ENCODE measurements at regions of chr6 and their contacts with region 1.

Region 1: DNA sequence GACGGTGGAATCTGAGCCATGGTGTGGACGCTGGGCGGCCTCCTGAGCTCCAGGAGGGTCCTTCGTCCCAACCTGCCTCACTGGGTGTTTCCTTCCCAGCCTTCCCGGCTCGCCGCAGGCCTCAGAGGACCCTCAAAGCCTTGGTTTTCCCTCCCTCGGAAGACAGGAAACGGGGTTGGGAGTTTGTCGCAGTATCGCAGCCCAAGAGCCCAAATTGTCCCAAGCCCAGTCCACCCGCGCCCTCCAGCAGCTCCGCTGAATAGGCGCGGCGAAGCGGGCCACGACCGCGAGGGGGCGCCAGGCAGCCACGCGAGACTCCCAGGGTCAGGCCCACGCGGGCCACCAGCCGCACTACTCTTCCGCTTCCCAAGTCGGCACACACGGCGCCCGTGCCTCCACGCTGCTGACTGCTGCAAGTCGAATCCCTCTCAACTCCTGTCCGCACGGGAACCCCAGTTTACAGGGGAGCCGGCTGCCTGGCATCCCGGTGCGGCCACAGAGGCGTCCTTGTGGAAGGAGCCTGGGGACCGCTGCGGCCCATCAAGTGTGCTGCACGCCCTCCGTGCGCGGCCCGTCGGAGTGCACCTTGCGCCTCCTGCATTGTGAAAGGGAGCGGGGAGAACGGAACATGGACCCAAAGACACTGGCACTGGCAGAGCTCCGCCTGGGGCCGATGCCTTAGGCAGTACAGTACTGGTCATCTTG is 40.4 kb upstream of the HMGA1 start:
- DNase-seq: peak; percentile 77
- H3K4me3 Mint-ChIP-seq: peak overlapping the region; percentile 79
- H3K27ac Mint-ChIP-seq: no peak overlapping the region
- H3K4me1 Mint-ChIP-seq: peaks cover 6% of the 10 kb centered on the region
- H3K27me3 Mint-ChIP-seq: peaks cover 13% of the 10 kb centered on the region

Region 2: DNA sequence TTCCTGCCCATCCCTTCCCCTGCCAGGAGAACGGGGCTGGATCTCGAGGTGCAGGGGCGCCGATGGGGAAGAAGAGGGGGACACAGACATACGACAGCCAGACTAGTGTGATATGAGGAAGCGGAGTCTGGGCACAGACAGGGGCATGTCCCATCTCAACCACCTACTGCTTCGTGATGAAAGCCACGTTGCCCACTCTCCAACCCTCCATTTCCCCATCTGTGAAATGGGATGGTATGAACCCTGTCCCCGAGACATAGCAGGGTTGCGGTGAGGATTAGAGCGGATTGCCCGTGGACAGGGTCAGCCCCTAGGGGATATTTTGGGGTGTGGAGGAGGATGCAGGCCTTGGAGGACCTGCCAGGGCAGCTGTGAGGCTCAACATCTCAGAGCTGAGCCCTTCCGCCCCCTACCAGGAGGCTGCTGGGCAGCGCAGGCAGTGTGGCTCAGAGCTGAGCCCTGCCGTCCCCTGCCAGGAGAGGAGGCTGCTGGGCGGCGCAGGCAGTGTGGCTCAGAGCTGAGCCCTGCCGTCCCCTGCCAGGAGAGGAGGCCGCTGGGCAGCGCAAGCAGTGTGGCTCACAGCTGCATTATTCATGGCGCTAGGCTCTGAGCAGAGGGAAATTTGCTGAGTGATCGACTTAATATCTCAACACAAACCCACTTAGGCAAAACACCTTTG is 122.1 kb before region 1 on chr6:
- intact Hi-C with region 1: no loop called
- DNase-seq: no peak
- H3K4me3 Mint-ChIP-seq: no peak overlapping the region
- H3K27ac Mint-ChIP-seq: no peak overlapping the region
- H3K4me1 Mint-ChIP-seq: no peaks in the 10 kb centered on the region
- H3K27me3 Mint-ChIP-seq: no peaks in the 10 kb centered on the region

Region 3: DNA sequence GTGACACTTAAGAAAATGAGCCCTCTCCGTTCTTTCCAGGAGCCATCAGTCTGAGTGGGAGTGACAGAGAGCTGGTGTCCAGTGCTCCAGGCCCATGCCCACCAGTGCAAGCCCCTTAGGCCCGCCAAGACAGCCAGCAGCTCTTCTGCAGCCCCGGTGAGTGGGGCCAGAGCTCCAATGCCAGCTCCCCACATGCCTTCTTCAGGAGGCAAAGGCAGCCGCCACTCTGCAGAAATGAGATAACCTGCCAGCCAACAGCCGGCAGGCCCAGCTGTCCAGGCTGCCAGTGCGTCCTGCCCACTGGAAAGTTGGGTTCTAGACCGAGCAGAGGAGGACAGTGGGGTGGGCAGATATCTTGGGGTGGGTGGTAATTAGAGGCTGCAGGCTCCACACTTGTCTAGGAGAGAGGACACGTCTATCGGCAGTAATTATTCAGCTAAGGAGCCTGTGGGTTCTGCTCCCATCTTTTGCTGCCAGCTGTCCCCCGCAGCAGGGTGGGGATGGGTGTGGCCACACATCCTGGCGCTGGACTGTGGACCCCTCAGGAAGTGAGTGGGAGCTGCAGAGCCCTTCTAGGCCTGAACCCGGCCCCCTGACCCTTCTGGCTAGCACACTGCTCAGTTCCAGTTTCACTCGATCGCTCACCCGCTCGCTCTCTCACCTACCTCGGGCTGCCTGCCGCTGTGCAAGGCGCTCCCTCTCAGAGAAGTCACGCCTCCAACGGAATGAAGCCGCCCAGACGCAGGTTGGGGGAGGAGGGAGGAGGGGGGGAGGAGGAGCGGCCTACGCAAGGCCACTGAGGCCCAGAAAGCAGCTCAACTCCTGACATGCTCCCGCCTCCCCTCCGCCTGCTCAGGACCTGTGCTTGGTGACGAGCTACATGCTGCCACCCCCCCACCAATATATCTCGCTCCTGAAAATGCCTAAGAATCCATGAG is 53.9 kb before region 1 on chr6:
- intact Hi-C with region 1: no loop called
- DNase-seq: no peak
- H3K4me3 Mint-ChIP-seq: no peak overlapping the region
- H3K27ac Mint-ChIP-seq: no peak overlapping the region
- H3K4me1 Mint-ChIP-seq: peaks cover 2% of the 10 kb centered on the region
- H3K27me3 Mint-ChIP-seq: peaks cover 64% of the 10 kb centered on the region

Region 4: GRCh38 chr6:34305982-34306708 is 109.9 kb after region 1 on chr6:
- intact Hi-C with region 1: no loop called
- DNase-seq: no peak
- H3K4me3 Mint-ChIP-seq: no peak overlapping the region
- H3K27ac Mint-ChIP-seq: no peak overlapping the region
- H3K4me1 Mint-ChIP-seq: peaks cover under 1% of the 10 kb centered on the region
- H3K27me3 Mint-ChIP-seq: no peaks in the 10 kb centered on the region

Region 5: DNA sequence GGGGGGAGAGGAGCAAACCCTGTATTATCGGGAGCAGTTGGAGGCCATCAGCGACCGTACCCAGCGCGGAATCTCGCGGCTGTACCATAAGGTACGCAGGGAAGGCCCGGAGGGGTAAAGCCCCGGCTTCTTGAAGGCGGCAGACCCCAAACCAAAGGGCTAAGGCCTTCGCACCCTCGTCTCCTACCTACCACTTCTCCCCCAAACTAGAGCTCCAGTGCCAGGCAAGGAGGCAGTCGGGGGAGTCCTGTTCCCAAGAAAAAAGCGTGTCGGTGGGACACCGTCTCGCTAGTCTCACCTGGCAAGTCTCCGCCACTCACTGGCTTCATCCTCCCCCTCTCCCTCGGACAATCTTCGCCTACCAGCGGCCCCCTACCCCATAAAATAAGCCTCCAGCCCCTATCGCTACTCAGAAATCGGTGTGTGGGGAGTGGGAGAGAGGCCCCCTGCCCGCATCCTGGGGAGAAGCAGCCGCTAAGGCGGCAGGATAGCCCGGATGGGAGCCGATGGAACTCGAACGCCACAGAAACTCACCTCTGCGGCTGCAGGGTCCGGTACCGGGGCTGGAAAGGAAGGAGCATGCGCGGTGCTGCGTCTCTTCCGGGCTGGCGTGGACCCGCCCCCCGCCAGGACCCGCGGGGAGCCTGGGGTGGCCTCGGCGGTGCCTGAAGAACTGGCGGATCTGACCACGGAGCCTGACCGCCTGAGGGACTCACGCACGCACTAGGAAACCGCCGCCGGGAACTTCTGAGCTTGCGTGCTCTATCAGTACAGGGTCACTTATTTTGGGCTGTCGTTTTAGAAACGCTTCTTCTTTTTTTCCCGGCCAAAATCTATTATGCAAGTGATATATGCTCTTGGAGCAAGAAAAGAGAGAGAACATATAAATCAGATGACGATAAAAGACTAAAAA is 229.5 kb after region 1 on chr6 and contains the start of gene RPS10:
- intact Hi-C with region 1: loop called (anchors 2 kb)
- DNase-seq: peak; percentile 86
- H3K4me3 Mint-ChIP-seq: peak within 1 kb of the TSS; percentile 98
- H3K27ac Mint-ChIP-seq: peak within 1 kb of the TSS; percentile 98
- H3K4me1 Mint-ChIP-seq: peaks cover 24% of the 10 kb centered on the region
- H3K27me3 Mint-ChIP-seq: peaks cover 3% of the 10 kb centered on the region
- total RNA-seq, gene RPS10: 1,642 and 1,684 TPM in 2 replicates

Measured in activated T-helper 2 cell treated with anti-CD3 and anti-CD28 coated beads, Interferon-gamma antibody, Interleukin-2, Interleukin-4, amounts not matched to agents 10 μg/mL and 5 μg/mL and 100 μg/mL, durations not matched to agents 14 hours and 24 hours and 36 hours (primary cell).